ENCODE measurements at regions of chr5 and their contacts with region 1.

Region 1: DNA sequence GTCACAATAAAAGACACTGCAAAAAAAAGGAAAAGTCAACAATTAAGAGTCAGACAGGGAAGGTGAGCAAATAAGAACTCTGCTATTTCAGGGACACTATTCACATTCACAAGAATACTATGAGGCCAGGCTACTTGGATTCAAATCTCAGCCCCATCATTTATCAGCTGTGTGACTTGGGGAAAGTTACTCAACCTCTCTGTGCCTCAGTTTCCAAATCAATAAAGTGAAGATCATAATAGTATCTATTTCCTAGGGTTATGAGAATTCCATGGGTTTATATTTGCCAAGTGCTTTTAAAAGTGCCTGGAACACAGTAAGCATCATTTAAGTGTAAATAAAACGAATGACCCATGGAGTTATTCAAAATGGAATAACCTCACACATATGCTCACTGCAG is 56.4 kb downstream of the ALDH7A1 start:
- DNase-seq: no peak
- ATAC-seq: no peak
- H3K4me3 ChIP-seq: no peak overlapping the region
- H3K27ac ChIP-seq: peak overlapping the region; percentile 2; the same call in 1 of the 2 replicates
- H3K4me1 ChIP-seq: peaks cover 6% of the 10 kb centered on the region; the same call in 1 of the 2 replicates
- H3K27me3 ChIP-seq: no peaks in the 10 kb centered on the region
- CTCF ChIP-seq: no peak

Region 2: GRCh38 chr5:124859027-124859426 is 1679.6 kb before region 1 on chr5:
- CTCF ChIA-PET with region 1: no interaction called
- POLR2A ChIA-PET with region 1: no interaction called
- in situ Hi-C with region 1: no loop called
- intact Hi-C with region 1: no loop called
- DNase-seq: no peak
- ATAC-seq: no peak
- H3K4me3 ChIP-seq: no peak overlapping the region
- H3K27ac ChIP-seq: no peak overlapping the region
- H3K4me1 ChIP-seq: no peaks in the 10 kb centered on the region
- H3K27me3 ChIP-seq: no peaks in the 10 kb centered on the region
- CTCF ChIP-seq: no peak

Region 3: DNA sequence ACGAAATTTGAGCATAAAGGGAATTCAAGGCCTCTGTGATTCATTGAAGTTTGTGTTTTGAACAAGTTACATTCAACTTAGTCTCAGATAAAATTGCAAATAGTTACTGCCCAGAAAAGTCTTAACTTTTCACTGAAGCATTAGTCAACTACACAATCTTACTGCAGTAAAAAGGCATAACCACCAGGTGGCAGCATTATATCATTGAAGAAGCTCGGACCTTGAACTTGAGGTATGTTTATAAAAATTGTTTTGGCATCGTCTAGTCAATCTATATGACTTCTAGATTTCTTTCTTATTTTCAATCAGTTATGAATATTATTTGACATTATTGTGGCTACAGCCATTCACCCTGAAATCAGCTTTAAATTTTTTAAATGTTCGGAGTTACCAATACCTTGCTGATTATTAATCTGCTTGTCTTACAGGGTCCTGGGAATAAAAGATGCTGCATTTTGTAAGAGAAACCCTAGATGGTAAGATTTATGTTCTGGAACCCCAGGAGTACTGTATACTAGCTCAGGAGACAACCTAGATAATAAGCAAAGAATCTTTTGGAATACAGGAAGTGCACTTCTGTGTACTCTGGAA is 199.3 kb before region 1 on chr5:
- CTCF ChIA-PET with region 1: interaction called, 13 read pairs
- POLR2A ChIA-PET with region 1: no interaction called
- in situ Hi-C with region 1: no loop called
- intact Hi-C with region 1: no loop called
- DNase-seq: peak; percentile 28
- ATAC-seq: peak; percentile 63; the same call in 1 of the 2 replicates
- H3K4me3 ChIP-seq: no peak overlapping the region
- H3K27ac ChIP-seq: peak overlapping the region; percentile 72; the same call in 1 of the 2 replicates
- H3K4me1 ChIP-seq: no peaks in the 10 kb centered on the region
- H3K27me3 ChIP-seq: no peaks in the 10 kb centered on the region
- CTCF ChIP-seq: peak; percentile 76; the same call in 1 of the 2 replicates

Region 4: DNA sequence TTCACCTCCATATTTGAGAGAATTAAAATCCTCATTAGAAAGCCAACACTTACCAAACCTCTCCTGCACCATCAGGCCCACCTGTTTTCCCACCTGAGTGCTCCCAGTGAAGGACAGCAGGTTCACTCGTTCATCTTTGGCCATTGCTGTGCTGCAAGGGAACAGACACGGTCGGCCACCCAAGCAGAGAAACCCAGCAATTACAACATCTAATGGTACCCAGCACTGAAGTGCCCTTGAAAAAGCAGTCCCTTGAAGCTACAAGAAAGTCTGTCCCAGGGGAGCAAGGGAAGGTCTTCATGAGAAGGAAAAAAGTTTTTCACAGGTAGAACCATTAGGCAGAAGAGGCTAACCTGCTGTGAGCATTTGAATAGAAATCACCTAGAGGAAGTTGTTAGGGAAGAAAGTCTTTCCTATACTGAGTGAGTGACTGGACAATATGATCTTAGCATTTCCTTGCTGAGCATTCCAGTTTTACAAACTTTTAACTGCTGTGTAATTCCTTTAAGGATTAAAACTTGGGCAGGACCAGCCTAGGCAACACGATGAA is 29.7 kb after region 1 on chr5:
- CTCF ChIA-PET with region 1: no interaction called
- POLR2A ChIA-PET with region 1: no interaction called
- in situ Hi-C with region 1: no loop called
- intact Hi-C with region 1: no loop called
- DNase-seq: no peak
- ATAC-seq: no peak
- H3K4me3 ChIP-seq: no peak overlapping the region
- H3K27ac ChIP-seq: no peak overlapping the region
- H3K4me1 ChIP-seq: no peaks in the 10 kb centered on the region
- H3K27me3 ChIP-seq: no peaks in the 10 kb centered on the region
- CTCF ChIP-seq: no peak

Measured in Panc1 (cell line).